PC-3 (cell line): ENCODE measurements at regions of chrX and their contacts with region 1.

Region 1: DNA sequence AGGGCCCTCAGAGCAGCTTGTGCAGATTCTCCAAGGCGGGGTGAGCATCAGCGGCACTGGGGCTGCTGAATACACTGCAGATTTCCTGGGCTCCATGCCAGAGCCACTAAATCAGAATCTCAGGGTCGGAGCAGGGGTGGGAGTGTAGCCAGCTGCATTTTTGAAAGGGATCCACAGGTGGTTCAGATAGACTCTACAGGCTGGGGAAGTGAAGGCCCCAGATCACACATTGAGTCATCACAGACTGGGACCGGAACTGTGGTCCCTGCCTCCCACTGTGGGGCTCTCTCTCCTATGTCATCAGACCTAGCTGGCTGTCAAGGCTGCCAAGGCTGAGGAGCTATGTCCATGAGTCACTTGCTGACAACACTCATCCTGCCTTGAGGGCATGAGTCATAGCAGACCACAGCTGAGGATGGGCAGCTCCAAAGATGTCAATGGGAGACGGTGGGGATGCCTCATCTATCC is 162.3 kb upstream of the MAMLD1 start:
- DNase-seq: peak; percentile 98
- ATAC-seq: peak; percentile 94
- H3K4me3 ChIP-seq: no peak overlapping the region
- H3K27ac ChIP-seq: peak overlapping the region; percentile 89
- H3K4me1 ChIP-seq: peaks cover 37% of the 10 kb centered on the region
- H3K27me3 ChIP-seq: no peaks in the 10 kb centered on the region
- CTCF ChIP-seq: no peak

Region 2: GRCh38 chrX:149982310-149982709 is 218.5 kb before region 1 on chrX:
- CTCF ChIA-PET with region 1: no interaction called
- POLR2A ChIA-PET with region 1: no interaction called
- intact Hi-C with region 1: no loop called
- DNase-seq: no peak
- ATAC-seq: no peak
- H3K4me3 ChIP-seq: no peak overlapping the region
- H3K27ac ChIP-seq: no peak overlapping the region
- H3K4me1 ChIP-seq: no peaks in the 10 kb centered on the region
- H3K27me3 ChIP-seq: no peaks in the 10 kb centered on the region
- CTCF ChIP-seq: no peak

Region 3: DNA sequence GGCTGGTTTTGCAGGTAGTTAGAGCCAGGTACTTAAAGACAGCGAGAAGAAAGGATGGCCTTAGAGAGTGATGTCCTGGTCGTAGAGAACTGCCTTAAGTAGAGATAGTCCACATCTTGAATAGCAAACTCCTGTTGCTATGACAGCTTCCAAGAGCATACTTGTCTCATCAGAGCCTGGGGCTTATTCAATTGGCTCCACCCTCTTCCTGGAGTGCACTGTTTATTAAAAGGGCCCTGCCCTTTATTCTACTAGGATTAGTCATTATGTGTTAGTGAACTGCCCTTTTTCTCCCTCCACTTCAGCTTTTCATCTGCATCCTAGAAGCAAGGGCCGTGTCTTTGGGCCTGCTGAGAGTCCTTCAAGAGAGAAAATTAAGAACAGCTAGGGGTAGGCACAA is 168.1 kb before region 1 on chrX:
- CTCF ChIA-PET with region 1: no interaction called
- POLR2A ChIA-PET with region 1: no interaction called
- intact Hi-C with region 1: loop called (anchors 5 kb)
- DNase-seq: peak; percentile 87
- ATAC-seq: peak; percentile 84
- H3K4me3 ChIP-seq: peak overlapping the region; percentile 33; the same call in 1 of the 2 replicates
- H3K27ac ChIP-seq: peak overlapping the region; percentile 76
- H3K4me1 ChIP-seq: peaks cover 50% of the 10 kb centered on the region
- H3K27me3 ChIP-seq: no peaks in the 10 kb centered on the region
- CTCF ChIP-seq: no peak

Region 4: GRCh38 chrX:150084496-150085229 is 116.2 kb before region 1 on chrX:
- CTCF ChIA-PET with region 1: no interaction called
- POLR2A ChIA-PET with region 1: no interaction called
- intact Hi-C with region 1: loop called (anchors 1 kb)
- DNase-seq: peak; percentile 87
- ATAC-seq: peak; percentile 83
- H3K4me3 ChIP-seq: peak overlapping the region; percentile 11; the same call in 1 of the 2 replicates
- H3K27ac ChIP-seq: peak overlapping the region; percentile 94
- H3K4me1 ChIP-seq: peaks cover 33% of the 10 kb centered on the region
- H3K27me3 ChIP-seq: no peaks in the 10 kb centered on the region
- CTCF ChIP-seq: no peak

Region 5: DNA sequence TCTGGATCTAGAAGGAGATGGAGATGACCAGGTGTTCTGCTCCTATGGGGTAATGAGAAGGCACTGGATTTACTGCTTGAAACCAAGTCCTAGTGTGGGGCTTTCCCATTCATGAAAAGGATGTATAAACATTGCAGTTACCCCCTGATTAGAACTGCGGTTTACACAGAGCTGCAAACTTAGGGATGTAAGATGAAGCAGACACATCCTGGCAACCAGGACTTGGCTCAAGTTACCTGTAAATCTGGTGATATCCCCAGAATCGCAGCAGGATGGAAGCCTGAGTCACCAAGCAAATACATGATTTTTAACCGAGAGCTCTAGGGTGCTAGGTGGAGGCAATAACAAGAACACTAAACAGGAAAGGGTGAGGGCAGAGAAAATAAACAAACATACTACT is 16.4 kb before region 1 on chrX:
- CTCF ChIA-PET with region 1: no interaction called
- POLR2A ChIA-PET with region 1: no interaction called
- intact Hi-C with region 1: loop called (anchors 2 kb)
- DNase-seq: peak; percentile 92
- ATAC-seq: peak; percentile 96
- H3K4me3 ChIP-seq: no peak overlapping the region
- H3K27ac ChIP-seq: peak overlapping the region; percentile 82
- H3K4me1 ChIP-seq: peaks cover 17% of the 10 kb centered on the region
- H3K27me3 ChIP-seq: no peaks in the 10 kb centered on the region
- CTCF ChIP-seq: no peak

Region 6: GRCh38 chrX:150438165-150438564 is 237.3 kb after region 1 on chrX:
- CTCF ChIA-PET with region 1: no interaction called
- POLR2A ChIA-PET with region 1: no interaction called
- intact Hi-C with region 1: no loop called
- DNase-seq: no peak
- ATAC-seq: no peak
- H3K4me3 ChIP-seq: no peak overlapping the region
- H3K27ac ChIP-seq: no peak overlapping the region
- H3K4me1 ChIP-seq: peaks cover 10% of the 10 kb centered on the region
- H3K27me3 ChIP-seq: no peaks in the 10 kb centered on the region
- CTCF ChIP-seq: no peak